ENCODE measurements at regions of chr17 and their contacts with region 1.

Region 1: GRCh38 chr17:12180644-12181261 is 160.1 kb downstream of the MAP2K4 start:
- DNase-seq: no peak
- H3K4me3 ChIP-seq: no peak overlapping the region
- H3K27ac ChIP-seq: no peak overlapping the region
- H3K4me1 ChIP-seq: no peaks in the 10 kb centered on the region
- H3K27me3 ChIP-seq: no peaks in the 10 kb centered on the region
- CTCF ChIP-seq: peak in 2 of 3 experiments; percentile 53 to 71
- POLR2A ChIP-seq: no peak

Region 2: GRCh38 chr17:12328204-12328603 is 147.5 kb after region 1 on chr17:
- intact Hi-C with region 1: no loop called
- DNase-seq: no peak
- H3K4me3 ChIP-seq: no peak overlapping the region
- H3K27ac ChIP-seq: no peak overlapping the region
- H3K4me1 ChIP-seq: no peaks in the 10 kb centered on the region
- H3K27me3 ChIP-seq: no peaks in the 10 kb centered on the region
- CTCF ChIP-seq: no peak
- POLR2A ChIP-seq: no peak

Region 3: GRCh38 chr17:13002766-13003451 is 822.2 kb after region 1 on chr17:
- intact Hi-C with region 1: loop called (anchors 5 kb)
- DNase-seq: no peak
- H3K4me3 ChIP-seq: no peak overlapping the region
- H3K27ac ChIP-seq: no peak overlapping the region
- H3K4me1 ChIP-seq: peaks cover 5% of the 10 kb centered on the region
- H3K27me3 ChIP-seq: no peaks in the 10 kb centered on the region
- CTCF ChIP-seq: peak; percentile 69 to 85 (median 71)
- POLR2A ChIP-seq: no peak